H1 (cell line): ENCODE measurements at regions of chr6 and their contacts with region 1.

Region 1: DNA sequence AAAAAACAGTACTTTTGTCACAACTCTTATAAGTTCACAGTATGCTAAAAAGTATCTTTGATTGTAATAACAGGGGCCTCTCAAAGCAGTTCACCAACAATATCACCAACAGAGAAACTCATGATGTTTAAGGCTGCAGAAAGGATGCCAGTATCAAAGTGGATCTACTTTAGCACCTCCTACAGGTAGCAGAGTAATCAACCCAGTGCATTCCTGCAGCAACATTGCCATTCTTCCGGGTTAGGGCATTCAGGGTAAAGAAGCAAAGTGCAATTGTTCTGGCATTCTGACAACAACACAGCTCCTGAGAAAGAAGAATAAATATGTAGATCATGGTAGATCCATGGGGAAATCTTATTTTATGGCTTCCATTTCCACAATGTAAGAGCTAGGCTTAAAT is 7.6 kb upstream of the SLC17A4 start:
- DNase-seq: no peak
- H3K4me3 ChIP-seq: no peak overlapping the region
- H3K27ac ChIP-seq: no peak overlapping the region
- H3K4me1 ChIP-seq: no peaks in the 10 kb centered on the region
- H3K27me3 ChIP-seq: no peaks in the 10 kb centered on the region
- CTCF ChIP-seq: peak in 2 of 3 experiments; percentile 44 to 68; a peak in 3 of 4 replicates
- EP300 ChIP-seq: no peak
- POLR2A ChIP-seq: no peak
- RAD21 ChIP-seq: peak; percentile 17 to 48; a peak in 2 of 4 replicates

Region 2: GRCh38 chr6:25601800-25602673 is 144.9 kb before region 1 on chr6:
- CTCF ChIA-PET with region 1: no interaction called
- POLR2A ChIA-PET with region 1: no interaction called
- DNase-seq: no peak
- H3K4me3 ChIP-seq: no peak overlapping the region
- H3K27ac ChIP-seq: no peak overlapping the region
- H3K4me1 ChIP-seq: no peaks in the 10 kb centered on the region
- H3K27me3 ChIP-seq: no peaks in the 10 kb centered on the region
- CTCF ChIP-seq: peak in 2 of 3 experiments; percentile 27 to 29; a peak in 2 of 4 replicates
- EP300 ChIP-seq: no peak
- POLR2A ChIP-seq: no peak
- RAD21 ChIP-seq: peak in 1 of 2 experiments; percentile 69; a peak in 3 of 4 replicates

Region 3: DNA sequence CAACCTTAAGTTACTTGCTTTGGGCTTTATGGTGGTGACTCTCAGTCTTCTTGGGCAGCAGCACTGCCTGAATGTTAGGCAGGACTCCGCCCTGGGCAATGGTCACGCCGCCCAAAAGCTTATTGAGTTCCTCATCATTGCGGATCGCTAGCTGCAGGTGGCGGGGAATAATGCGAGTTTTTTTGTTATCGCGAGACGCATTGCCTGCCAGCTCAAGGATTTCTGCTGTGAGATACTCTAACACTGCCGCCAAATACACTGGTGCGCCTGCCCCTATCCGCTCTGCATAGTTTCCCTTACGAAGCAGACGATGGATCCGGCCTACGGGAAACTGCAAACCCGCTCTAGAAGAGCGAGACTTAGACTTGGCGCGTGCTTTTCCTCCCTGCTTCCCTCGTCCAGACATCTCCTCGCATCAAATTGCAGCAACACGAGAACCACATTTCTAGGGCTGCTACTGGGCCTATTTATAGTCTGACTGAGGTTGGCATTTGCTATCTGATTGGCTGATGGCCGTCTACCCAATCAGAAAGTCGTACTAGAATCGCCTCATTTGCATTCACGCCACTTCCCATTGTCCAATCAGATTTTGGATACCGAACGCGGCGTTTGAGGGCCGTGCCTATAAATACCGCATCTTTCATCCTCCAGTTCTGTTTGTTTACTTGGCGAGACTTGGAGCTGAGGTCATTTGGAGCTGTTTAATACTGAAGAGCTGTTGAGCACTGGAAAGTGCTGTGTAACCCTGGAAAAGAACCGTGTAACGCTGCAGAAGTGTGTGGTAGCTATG is 20.7 kb before region 1 on chr6:
- CTCF ChIA-PET with region 1: interaction called, 12 read pairs
- POLR2A ChIA-PET with region 1: no interaction called
- DNase-seq: no peak
- H3K4me3 ChIP-seq: no peak overlapping the region
- H3K27ac ChIP-seq: no peak overlapping the region
- H3K4me1 ChIP-seq: no peaks in the 10 kb centered on the region
- H3K27me3 ChIP-seq: no peaks in the 10 kb centered on the region
- CTCF ChIP-seq: no peak
- EP300 ChIP-seq: no peak
- POLR2A ChIP-seq: no peak
- RAD21 ChIP-seq: no peak

Region 4: DNA sequence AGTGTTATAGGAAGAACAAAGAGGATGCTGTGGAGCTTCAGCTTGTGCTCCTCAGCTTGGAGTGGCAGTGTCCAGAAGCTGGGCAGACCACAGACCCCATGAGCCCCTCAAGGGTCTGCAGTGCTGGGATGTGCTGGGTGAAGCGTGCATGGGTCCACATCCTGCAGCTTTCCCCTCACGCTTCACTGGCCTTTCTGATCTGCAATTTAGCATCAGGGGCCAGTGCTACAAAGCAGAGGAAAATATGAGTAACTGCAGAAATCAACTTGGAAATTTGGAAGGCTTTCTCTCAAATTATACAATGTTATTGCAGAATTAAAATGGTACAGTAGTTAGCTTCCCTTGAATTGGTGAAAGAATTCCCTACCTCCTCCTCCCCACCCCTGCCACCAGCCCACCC is 17.6 kb after region 1 on chr6:
- CTCF ChIA-PET with region 1: interaction called, 13 read pairs
- POLR2A ChIA-PET with region 1: no interaction called
- DNase-seq: no peak
- H3K4me3 ChIP-seq: no peak overlapping the region
- H3K27ac ChIP-seq: no peak overlapping the region
- H3K4me1 ChIP-seq: no peaks in the 10 kb centered on the region
- H3K27me3 ChIP-seq: no peaks in the 10 kb centered on the region
- CTCF ChIP-seq: no peak
- EP300 ChIP-seq: no peak
- POLR2A ChIP-seq: no peak
- RAD21 ChIP-seq: no peak